Aorta (tissue), 5 donors: ENCODE measurements at regions of chr20 and their contacts with region 1.

Region 1: DNA sequence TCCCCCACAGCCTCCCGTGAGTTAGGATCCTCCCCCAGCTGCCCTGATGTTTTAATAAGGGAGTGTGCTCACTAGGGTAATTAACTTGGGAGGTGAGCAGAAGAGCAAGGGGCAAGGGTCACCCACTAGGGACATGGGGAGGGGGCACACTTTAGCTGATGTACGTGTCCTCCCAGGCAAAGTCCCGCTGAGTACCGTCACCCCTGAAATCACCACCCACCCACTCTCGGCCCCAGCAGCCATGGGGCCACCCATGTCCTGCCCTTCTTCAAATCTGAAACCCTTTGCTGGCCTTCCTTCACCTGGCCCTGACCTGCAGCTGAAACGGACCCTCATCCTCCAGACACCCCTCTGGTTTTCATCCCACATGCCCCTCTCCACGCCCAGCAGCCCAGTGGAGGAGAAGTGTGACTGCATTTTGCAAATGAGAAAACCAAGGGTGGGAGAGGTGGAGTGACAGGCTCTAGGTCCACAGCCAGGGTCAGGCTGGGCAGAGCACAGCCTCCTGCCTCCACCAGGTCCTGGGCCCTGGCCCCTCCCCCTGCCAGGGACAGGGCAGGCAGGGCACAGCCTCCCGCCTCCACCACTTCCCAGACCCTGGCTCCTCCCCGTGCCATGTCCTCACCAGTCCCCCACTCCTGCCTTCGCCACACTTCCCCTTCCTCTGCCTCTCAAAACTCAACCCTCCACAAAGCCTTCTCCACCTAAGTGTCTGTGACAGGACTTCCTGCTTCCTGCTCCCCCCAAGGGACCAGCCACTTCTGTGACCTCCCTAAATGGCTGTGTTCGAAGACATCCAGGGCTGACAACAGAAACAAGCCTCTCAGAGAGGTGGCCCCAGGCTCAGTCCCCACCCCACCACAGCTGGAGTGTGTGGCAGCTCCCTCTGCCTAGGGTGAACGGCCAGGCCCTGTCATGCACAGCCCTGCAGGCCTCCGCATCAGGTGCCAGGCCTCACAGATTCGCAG is 15.1 kb downstream of the ACSS1 start:
- DNase-seq: peak; percentile 82 to 87
- ATAC-seq: peak; percentile 40
- H3K4me3 ChIP-seq: no peak overlapping the region
- H3K27ac ChIP-seq: peak overlapping the region in 1 of 2 donors; percentile 4
- H3K4me1 ChIP-seq: peaks cover 0 to 5% of the 10 kb centered on the region in 2 donors
- H3K27me3 ChIP-seq: no peaks in the 10 kb centered on the region

Region 2: DNA sequence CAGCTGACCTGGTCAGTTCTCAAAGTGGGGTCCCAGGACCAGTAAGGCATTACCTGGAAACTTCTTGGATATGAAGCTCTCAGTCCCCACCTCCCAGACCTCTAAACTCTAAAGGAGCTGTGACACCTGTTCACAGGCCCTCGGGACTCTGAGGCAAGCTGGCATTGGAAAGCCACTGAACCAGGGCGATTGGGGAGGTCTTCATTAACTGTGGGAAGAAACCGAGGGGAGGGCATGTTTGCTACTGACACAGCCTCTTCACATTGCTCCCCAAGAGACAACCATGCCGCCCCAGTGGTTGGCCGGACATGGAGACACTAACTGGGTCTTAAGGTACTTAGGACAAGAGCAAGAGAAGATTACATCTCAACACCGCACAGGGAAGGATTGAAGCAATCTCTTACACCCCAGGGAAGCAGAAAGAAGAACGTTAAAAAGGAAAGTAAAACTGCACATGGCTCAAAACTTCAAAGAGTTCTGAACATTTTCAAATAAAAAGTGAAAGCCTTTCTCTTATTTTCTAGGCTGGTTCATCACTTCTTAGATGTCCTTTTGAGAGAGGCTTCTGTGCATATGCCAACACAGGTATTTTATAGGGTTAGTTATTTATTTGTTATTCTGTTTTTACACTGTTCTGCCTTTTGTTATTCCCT is 303.7 kb before region 1 on chr20:
- intact Hi-C with region 1: no loop called
- DNase-seq: no peak
- ATAC-seq: no peak
- H3K4me3 ChIP-seq: no peak overlapping the region
- H3K27ac ChIP-seq: no peak overlapping the region
- H3K4me1 ChIP-seq: no peaks in the 10 kb centered on the region
- H3K27me3 ChIP-seq: no peaks in the 10 kb centered on the region

Region 3: DNA sequence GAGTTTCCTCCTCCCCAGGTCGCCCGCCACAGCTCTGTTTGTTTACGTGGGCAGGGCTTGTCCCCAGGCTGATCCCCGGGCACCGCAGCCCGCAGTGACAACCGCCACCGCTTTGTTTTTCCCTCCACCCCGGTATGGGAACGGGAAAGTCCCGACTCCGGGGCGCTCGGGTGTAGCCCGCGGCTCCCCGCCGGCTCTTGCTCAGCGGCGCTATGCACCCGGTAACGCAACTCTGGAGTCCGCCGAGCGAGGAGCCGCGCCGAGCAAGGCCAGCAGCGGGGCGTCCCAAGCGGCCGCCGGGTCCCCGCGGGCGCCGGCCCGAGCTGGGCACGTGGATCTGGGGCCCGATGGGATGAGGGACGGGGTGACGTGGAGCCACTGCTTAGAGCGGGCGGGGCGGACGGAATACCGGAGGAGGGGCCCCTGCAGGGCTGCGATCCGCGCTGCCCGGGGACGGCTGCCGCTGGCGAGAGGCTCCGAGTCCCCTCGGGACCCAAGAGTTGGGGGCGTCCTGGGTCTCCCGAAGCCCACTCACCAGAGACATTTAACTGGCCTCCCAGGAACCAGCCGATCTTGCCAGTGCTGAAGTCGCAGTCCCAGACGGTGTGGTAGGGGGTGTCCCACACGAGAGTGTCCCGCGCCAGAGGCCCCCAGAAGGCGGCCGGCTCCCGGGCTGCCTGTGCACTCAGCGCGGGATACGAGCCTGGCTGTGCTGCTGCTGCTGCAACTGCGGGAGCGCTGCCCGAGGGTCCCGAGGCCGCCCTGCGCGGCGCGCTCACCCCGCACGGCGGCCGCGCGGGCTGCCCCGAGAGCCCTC is 14.6 kb after region 1 on chr20:
- intact Hi-C with region 1: loop called in 1 of 2 experiments (anchors 2 kb)
- DNase-seq: peak; percentile 89 to 91
- ATAC-seq: peak; percentile 84
- H3K4me3 ChIP-seq: peak overlapping the region; percentile 68 to 78
- H3K27ac ChIP-seq: peak overlapping the region in 1 of 2 donors; percentile 82
- H3K4me1 ChIP-seq: peaks cover 4 to 8% of the 10 kb centered on the region in 2 donors
- H3K27me3 ChIP-seq: no peaks in the 10 kb centered on the region

Region 4: GRCh38 chr20:25237610-25238318 is 194.9 kb after region 1 on chr20:
- intact Hi-C with region 1: loop called in 1 of 2 experiments (anchors 5 kb)
- DNase-seq: peak in 1 of 2 donors; percentile 84
- ATAC-seq: peak; percentile 94
- H3K4me3 ChIP-seq: no peak overlapping the region
- H3K27ac ChIP-seq: peak overlapping the region; percentile 57 to 83
- H3K4me1 ChIP-seq: no peaks in the 10 kb centered on the region
- H3K27me3 ChIP-seq: no peaks in the 10 kb centered on the region